Activated naive CD4-positive, alpha-beta T cell treated with anti-CD3 and anti-CD28 coated beads, Interleukin-2, amount 10 ng/mL, durations not matched to agents 7 days and 5 days (primary cell): ENCODE measurements at regions of chr1 and their contacts with region 1.

Region 1: GRCh38 chr1:30718636-30719405 is 4.6 kb downstream of the MATN1 start:
- DNase-seq: peak; percentile 87
- H3K4me3 Mint-ChIP-seq: peak overlapping the region; percentile 92
- H3K27ac Mint-ChIP-seq: peak overlapping the region; percentile 99
- H3K4me1 Mint-ChIP-seq: peaks cover 22% of the 10 kb centered on the region
- H3K27me3 Mint-ChIP-seq: peaks cover 12% of the 10 kb centered on the region

Region 2: DNA sequence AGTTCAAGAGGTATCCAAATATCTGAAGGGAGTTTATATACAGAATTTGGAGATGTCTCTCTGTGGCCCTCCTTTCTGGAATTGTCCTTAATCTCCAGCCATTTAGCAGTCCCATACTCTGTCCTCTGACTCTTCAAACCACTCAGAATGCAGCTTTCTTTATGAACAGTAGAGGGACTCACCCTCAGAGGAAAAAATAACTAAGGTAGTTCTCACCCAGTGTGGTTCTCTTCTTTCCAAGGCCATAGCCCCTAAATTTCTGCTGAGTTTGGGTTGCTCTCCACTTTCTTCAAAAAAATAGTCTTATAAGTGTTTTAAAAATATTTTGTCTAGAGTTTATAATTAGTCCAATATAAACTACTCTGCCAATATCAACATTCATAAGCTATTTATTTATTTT is 365.2 kb before region 1 on chr1:
- CTCF ChIA-PET with region 1: no interaction called
- DNase-seq: no peak
- H3K4me3 Mint-ChIP-seq: no peak overlapping the region
- H3K27ac Mint-ChIP-seq: no peak overlapping the region
- H3K4me1 Mint-ChIP-seq: no peaks in the 10 kb centered on the region
- H3K27me3 Mint-ChIP-seq: peaks cover 16% of the 10 kb centered on the region

Region 3: GRCh38 chr1:30540611-30541192 is 178.1 kb before region 1 on chr1:
- CTCF ChIA-PET with region 1: no interaction called
- DNase-seq: no peak
- H3K4me3 Mint-ChIP-seq: no peak overlapping the region
- H3K27ac Mint-ChIP-seq: no peak overlapping the region
- H3K4me1 Mint-ChIP-seq: no peaks in the 10 kb centered on the region
- H3K27me3 Mint-ChIP-seq: peaks cover 4% of the 10 kb centered on the region

Region 4: DNA sequence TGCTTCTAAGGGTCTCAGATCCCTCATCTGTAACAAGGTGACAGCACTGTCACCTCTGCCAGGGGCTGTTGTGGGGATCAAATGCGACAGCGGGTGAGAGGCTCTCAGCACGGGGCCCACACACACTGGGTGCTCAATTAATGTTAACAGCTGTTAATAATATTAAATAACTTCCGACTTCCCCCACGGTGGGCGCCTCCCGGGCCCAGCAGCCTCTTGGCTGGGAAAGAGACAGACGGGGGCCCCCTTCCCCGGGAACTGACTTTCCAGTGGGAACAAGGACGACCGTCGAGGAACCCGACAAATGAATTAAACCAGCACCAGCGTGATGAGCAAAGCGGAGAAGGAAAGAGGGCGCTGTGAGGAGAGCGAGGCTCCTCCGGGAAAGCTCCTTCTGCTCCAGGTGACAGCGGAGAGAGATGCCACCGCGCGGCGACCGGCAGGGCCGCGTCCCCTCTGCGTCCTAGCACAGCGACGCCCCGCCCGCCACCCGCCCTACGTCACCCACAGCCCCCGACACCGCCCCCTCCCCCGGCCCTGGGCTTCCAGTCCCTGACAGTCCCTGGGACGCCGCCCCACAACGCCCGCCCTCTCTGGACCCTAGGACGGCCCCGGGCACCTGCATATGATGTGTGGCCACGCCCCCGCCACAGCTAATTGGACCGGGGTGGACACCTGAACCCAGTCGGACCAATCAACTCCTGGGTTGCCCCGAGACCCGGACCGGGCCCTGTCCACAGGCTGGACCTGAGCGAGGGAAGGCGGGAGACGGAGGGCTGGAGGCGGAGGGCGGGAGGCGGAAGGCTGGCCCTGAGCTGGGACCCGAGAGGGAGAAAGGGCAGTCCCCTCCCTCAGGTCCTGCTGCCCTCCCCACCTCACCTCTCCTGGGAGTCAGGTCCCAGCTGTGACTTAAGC is 33.7 kb before region 1 on chr1:
- CTCF ChIA-PET with region 1: no interaction called
- DNase-seq: no peak
- H3K4me3 Mint-ChIP-seq: no peak overlapping the region
- H3K27ac Mint-ChIP-seq: no peak overlapping the region
- H3K4me1 Mint-ChIP-seq: no peaks in the 10 kb centered on the region
- H3K27me3 Mint-ChIP-seq: peaks cover 78% of the 10 kb centered on the region

Region 5: DNA sequence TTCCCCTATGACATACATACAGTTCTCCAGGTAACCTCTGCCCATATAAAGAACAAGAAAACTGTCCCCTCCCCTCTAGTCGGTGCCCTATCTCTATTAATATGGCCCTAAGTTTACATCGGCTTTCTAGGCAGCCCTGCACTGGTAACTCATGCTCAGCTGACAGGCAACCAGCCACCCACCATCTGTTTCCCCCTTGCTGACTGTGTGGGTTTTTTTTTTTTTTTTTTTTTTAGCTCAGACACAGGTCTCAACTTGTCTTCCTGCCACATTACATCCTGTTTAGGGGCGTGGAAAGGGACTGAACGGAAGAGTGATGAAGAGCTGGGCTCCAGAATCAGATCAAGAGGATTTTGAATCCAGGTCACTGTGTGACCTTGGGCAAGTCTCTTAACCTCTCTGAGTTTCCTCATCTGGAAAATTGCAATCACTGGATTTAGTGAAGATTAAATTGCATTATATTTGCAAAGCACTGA is 24.8 kb after region 1 on chr1:
- CTCF ChIA-PET with region 1: interaction called, 78 read pairs
- DNase-seq: peak; percentile 85
- H3K4me3 Mint-ChIP-seq: peak overlapping the region; percentile 78
- H3K27ac Mint-ChIP-seq: peak overlapping the region; percentile 99
- H3K4me1 Mint-ChIP-seq: peaks cover 100% of the 10 kb centered on the region
- H3K27me3 Mint-ChIP-seq: no peaks in the 10 kb centered on the region

Region 6: DNA sequence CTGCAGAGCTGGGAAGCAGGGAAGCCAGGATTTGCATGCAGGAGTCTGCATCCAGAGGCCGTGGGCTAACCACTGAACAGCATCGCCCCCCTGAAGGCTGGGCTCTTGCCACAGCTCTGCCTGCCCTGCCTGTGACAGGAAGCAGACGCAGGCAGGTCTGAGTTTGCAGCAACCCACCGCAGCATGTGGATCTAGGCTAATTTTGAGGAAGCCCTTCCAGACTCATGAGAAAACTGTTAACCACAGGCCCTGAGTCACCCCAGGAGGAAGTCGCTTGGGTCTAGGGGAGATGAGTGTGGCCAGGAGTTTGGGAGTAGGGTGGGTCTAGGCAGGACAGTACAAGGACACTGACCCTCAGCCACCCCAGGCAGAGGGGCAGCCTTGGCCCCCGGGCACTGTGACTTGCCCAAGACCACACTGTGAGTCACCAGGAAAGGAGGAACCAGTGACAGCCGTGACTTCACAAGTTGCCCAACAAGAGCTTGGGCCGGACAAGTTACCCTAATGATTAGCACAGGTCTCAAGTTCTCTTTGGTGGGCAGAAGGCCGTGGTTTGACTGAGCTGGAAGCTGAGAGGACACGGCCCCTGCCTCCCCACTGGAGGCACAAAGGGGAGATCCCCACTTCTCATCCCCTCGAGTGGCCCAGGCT is 37.8 kb after region 1 on chr1:
- CTCF ChIA-PET with region 1: interaction called, 32 read pairs
- DNase-seq: peak; percentile 82
- H3K4me3 Mint-ChIP-seq: peak overlapping the region; percentile 98
- H3K27ac Mint-ChIP-seq: peak overlapping the region; percentile 96
- H3K4me1 Mint-ChIP-seq: peaks cover 84% of the 10 kb centered on the region
- H3K27me3 Mint-ChIP-seq: no peaks in the 10 kb centered on the region

Region 7: GRCh38 chr1:30801771-30802198 is 83.0 kb after region 1 on chr1:
- CTCF ChIA-PET with region 1: interaction called, 10 read pairs
- DNase-seq: peak; percentile 84
- H3K4me3 Mint-ChIP-seq: no peak overlapping the region
- H3K27ac Mint-ChIP-seq: no peak overlapping the region
- H3K4me1 Mint-ChIP-seq: peaks cover 2% of the 10 kb centered on the region
- H3K27me3 Mint-ChIP-seq: peaks cover 57% of the 10 kb centered on the region

Region 8: GRCh38 chr1:30816211-30817076 is 97.6 kb after region 1 on chr1:
- CTCF ChIA-PET with region 1: no interaction called
- DNase-seq: no peak
- H3K4me3 Mint-ChIP-seq: no peak overlapping the region
- H3K27ac Mint-ChIP-seq: no peak overlapping the region
- H3K4me1 Mint-ChIP-seq: no peaks in the 10 kb centered on the region
- H3K27me3 Mint-ChIP-seq: peaks cover 24% of the 10 kb centered on the region

Region 9: DNA sequence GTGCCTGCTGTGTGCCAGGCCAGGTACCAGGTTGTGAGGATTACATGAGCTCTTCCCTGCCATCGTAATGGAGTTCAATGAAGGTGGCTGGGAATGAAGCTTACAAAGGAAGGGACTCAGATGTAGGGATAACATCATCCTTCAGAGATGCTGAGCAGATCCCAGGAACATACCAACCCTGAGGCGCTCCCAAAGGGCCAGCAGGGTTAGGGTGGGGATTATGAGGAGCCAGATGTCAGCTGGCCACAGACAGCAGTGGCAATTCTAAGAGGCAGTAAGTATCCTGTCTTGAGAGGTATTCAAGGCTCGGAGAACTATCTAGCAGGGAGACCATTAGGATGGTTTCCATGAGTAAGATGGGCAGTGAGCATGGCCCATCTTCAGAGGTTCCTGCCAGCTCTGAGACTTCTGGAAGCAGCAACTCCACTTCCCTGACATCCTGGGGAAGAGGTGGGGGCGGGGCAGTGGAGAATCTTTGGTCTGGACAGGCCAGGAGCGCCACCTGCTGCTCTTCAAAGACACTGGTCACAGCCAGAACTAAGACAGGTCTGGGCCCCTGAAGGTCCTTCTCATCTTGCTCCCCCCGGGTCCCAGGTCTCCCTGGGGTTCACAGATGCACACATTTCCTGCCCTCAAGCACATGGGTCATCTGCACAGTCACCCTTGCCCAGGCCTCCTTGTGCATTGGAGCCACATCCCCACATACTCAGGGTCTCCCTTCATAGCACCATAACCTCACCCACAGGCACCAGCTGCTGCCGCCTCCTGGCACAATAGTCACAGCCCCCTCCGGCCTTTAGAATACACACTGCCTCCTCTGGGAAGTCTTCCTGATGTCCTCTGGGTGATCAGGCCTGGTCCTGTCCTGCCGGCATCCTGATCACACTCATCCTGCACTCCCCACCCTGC is 192.5 kb after region 1 on chr1:
- CTCF ChIA-PET with region 1: interaction called, 36 read pairs
- DNase-seq: peak; percentile 74
- H3K4me3 Mint-ChIP-seq: no peak overlapping the region
- H3K27ac Mint-ChIP-seq: no peak overlapping the region
- H3K4me1 Mint-ChIP-seq: peaks cover 18% of the 10 kb centered on the region
- H3K27me3 Mint-ChIP-seq: peaks cover 61% of the 10 kb centered on the region